PC-3 (cell line): ENCODE measurements at regions of chr20 and their contacts with region 1.

Region 1: DNA sequence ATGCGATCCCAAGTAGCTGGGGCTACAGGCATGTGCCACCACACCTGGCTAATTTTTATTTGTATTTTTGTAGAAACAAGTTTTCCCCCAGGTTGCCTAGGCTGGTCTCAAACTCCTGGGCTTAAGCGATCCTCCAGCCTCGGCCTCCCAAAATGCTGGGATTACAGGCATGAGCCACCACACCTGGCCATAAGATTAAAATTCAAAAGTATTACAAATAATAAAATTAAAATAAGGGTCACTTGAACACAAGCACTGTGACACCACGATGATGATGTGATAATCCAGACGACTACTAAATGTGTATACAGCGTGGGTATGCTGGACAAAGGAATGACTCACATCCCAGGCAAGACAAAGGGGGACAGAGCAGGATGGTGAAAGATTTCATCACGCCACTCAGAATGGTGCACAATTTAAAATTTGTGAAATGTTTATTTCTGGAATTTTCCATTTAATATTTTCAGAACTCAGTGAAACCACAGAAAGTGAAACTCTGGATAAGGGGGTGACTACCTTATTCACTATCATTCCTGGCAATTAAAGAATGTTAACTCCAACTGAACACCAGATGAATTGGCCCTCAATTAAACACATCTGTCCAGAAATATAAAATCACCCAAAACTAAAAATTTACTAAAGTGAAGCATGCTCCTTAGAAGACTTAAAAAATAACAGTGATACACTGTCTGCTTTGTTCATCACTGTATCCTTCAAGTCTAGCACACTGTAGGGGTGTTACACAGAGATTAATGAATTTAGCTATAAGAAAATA is 13.1 kb downstream of the B4GALT5 start:
- DNase-seq: peak; percentile 85
- ATAC-seq: peak; percentile 78
- H3K4me3 ChIP-seq: peak overlapping the region; percentile 3; the same call in 1 of the 2 replicates
- H3K27ac ChIP-seq: peak overlapping the region; percentile 85
- H3K4me1 ChIP-seq: peaks cover 55% of the 10 kb centered on the region
- H3K27me3 ChIP-seq: no peaks in the 10 kb centered on the region
- CTCF ChIP-seq: no peak

Region 2: GRCh38 chr20:49657118-49657901 is 43.3 kb before region 1 on chr20:
- CTCF ChIA-PET with region 1: no interaction called
- POLR2A ChIA-PET with region 1: no interaction called
- intact Hi-C with region 1: loop called (anchors 10 kb)
- DNase-seq: no peak
- ATAC-seq: no peak
- H3K4me3 ChIP-seq: no peak overlapping the region; the same call in 1 of the 2 replicates
- H3K27ac ChIP-seq: peak overlapping the region; percentile 63
- H3K4me1 ChIP-seq: peaks cover 14% of the 10 kb centered on the region
- H3K27me3 ChIP-seq: no peaks in the 10 kb centered on the region
- CTCF ChIP-seq: no peak